ENCODE measurements at regions of chr2 and their contacts with region 1.

Region 1: DNA sequence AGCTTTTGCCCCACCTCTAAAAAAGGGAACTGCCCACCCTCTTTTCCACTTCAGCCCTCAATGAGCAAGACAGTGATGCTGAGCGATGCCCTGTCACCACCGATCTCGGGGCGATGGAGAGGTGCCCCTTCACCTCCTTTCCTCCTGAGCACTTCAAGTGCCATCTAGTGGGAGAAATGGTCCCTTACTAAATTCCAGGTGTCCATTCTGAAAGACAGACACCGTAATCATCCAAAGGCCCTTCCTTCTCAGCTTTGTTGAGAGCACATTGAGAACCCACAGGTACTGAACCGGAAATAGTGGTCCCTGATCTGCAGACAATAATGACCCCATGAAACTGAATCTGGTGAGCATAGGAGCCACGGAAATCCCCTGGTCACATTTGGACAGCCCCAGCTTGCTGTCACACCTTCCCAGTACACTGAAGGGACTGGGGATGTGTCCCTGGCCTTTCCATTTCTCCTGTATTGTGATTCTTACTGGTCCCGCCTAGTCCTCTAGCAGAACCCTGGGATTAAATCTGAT is 38.5 kb downstream of the KCTD18 start:
- DNase-seq: peak; percentile 42
- H3K4me3 Mint-ChIP-seq: no peak overlapping the region
- H3K27ac Mint-ChIP-seq: peak overlapping the region; percentile 37
- H3K4me1 Mint-ChIP-seq: peaks cover 41% of the 10 kb centered on the region
- H3K27me3 Mint-ChIP-seq: no peaks in the 10 kb centered on the region

Region 2: DNA sequence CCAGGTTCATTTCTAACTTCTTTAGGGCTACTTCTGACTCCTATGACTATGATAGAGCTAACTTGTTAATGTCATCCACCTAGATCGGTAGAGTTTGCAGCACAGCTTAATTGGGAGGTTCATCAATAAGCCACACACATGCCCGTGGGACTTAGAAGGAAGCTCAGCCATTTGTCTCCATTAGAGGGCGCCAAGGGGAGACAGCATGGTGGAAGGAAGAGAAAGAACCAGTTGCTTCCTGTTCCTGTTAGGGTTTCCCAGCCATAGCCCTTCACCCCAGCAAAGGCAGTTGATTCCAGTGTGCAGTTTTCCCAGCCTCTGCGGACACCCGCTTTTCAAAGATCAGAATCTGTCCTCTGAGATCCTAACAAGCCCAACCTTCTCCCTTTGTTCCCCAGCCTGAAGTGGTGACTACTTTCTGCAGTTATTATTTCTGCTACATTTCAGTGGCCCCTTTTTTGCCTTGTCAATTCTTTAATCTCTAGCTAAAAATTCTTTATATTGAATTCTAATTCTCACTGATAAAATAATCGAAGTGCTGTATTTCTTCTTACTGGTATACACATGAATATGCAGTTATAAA is 485.7 kb before region 1 on chr2:
- CTCF ChIA-PET with region 1: interaction called, 21 read pairs
- POLR2A ChIA-PET with region 1: no interaction called
- DNase-seq: peak; percentile 68
- H3K4me3 Mint-ChIP-seq: no peak overlapping the region
- H3K27ac Mint-ChIP-seq: no peak overlapping the region
- H3K4me1 Mint-ChIP-seq: peaks cover 7% of the 10 kb centered on the region
- H3K27me3 Mint-ChIP-seq: no peaks in the 10 kb centered on the region

Region 3: DNA sequence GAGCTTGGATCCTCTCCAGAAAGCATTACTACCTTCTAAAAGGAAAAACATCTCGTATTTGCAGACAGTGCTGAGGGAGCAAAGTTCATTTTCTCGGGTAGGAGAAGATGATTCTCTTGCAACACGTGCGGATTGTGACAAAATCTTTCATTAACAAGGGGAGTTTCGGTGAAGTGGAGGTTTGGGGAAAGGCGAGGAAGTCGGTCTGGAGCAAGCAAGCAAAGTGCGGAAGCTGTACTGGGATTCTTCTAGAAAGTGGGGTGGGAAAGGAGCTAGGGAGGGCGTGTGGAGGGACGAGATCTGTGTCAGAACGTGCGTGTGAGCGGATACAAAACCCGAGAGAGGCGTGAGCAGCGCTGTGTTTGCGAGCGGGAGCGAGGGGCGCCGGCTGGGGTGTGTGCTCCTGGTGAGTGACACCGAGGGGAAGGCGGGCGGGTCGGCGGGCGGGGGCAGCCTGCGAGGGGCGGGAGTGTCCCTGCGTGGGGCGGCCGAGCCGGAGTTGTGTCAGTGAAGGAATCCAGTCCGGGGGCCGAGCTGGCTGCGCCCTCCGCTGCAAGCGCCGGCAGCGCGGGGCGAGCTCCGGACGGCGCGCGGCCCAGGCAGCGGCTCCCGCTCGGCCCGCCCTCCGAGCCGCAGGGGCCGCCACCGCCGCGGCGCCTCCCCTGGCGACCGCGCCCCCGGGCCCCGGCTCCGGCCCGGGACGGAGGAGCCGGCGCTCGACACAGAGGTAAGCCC is 165.0 kb before region 1 on chr2 and contains the start of gene SPATS2L:
- CTCF ChIA-PET with region 1: interaction called, 4 read pairs
- POLR2A ChIA-PET with region 1: interaction called, 12 read pairs
- DNase-seq: peak; percentile 72
- H3K4me3 Mint-ChIP-seq: peak within 1 kb of the TSS; percentile 82
- H3K27ac Mint-ChIP-seq: peak within 1 kb of the TSS; percentile 82
- H3K4me1 Mint-ChIP-seq: peaks cover 44% of the 10 kb centered on the region
- H3K27me3 Mint-ChIP-seq: peaks cover 3% of the 10 kb centered on the region
- total RNA-seq, gene SPATS2L: 79.0 to 82.3 TPM

Region 4: DNA sequence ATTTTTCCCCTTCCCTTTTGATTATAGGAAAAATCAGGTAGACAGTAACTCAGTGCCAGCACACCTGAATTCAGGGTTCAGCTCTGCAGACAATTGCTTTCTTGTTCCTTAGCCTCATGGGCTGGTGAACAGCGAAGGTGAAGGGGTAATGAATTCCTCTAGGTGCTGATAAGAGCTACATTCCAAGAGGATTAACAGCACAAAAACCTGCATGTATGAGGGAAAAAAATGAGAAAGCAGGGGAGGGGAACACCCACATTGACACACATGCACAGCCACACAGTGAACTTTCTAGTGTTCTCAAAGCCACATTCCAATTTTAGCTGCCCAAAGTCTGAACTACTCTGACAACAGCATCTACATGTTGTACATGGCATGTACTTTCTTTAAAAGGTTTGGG is 118.8 kb before region 1 on chr2:
- CTCF ChIA-PET with region 1: no interaction called
- POLR2A ChIA-PET with region 1: no interaction called
- DNase-seq: no peak
- H3K4me3 Mint-ChIP-seq: no peak overlapping the region
- H3K27ac Mint-ChIP-seq: no peak overlapping the region
- H3K4me1 Mint-ChIP-seq: no peaks in the 10 kb centered on the region
- H3K27me3 Mint-ChIP-seq: no peaks in the 10 kb centered on the region

Region 5: DNA sequence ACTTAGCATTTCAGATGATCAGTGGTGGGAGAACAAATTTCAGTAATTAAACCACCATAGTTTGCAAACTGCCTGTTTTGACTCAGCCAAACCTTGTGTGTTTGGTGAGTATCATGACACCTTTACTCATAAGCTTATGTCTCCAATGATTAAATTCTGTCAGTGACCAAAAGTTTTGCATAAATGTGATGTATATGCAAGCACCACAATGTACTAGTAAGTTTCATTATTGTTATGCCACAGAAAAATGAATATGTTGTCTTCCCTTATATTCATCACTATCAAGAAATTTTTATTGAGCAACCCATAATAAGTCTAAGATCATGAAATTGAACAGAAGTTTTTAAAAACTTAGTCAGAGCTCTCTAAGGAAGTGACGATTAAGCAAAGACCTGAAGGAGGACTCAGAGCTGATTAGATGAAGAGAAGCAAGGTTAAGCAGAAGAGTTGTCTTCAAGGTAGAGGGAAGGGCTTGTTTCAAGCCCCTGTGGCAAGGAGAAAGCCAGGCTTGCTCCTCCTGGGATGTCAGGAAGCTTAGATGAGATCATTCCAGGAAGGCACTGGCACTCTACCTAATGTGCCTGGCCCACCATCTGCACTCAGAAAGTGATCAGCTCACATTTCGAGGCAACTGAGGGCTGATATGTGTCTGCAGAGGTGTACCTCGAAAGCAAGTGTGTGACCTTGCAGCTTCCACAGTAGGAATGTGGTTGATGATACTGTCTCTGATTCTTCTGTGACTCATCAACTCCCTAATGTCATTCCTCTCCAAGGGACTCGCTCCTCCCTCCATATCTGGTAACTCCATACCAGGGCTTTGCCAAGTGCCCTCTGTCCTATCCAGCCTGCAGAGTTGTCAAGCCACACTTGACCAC is 16.2 kb before region 1 on chr2:
- CTCF ChIA-PET with region 1: interaction called, 9 read pairs
- POLR2A ChIA-PET with region 1: interaction called, 37 read pairs
- DNase-seq: no peak
- H3K4me3 Mint-ChIP-seq: no peak overlapping the region
- H3K27ac Mint-ChIP-seq: peak overlapping the region; percentile 80
- H3K4me1 Mint-ChIP-seq: peaks cover 39% of the 10 kb centered on the region
- H3K27me3 Mint-ChIP-seq: no peaks in the 10 kb centered on the region

Region 6: DNA sequence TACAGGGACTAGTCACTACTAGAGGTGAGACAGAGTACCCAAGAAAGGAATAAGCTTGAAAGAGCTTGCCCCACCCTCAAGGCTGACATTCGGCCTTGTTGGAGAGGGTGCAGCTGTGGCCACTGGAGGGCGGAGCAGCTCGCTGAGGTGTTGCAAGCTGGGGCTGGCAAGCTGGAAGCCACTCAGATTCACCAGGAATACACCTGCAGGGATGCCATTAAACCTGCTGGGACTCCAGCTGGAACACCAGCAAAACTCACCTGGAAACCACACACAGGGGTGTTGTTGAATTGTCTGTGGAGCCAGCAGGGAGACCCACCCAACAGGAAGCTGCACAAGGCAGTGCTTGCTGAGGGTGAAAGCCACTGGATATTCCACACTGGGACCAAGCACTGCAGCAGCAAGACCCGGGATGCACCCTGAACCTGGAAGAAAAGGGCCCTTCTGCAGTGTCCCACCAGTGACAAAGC is 12.4 kb after region 1 on chr2:
- CTCF ChIA-PET with region 1: interaction called, 14 read pairs
- POLR2A ChIA-PET with region 1: interaction called, 6 read pairs
- DNase-seq: peak; percentile 41
- H3K4me3 Mint-ChIP-seq: no peak overlapping the region
- H3K27ac Mint-ChIP-seq: no peak overlapping the region
- H3K4me1 Mint-ChIP-seq: peaks cover 35% of the 10 kb centered on the region
- H3K27me3 Mint-ChIP-seq: no peaks in the 10 kb centered on the region

Measured in activated CD4-positive, alpha-beta memory T cell treated with anti-CD3 and anti-CD28 coated beads, Interleukin-2, amount 10 ng/mL, durations not matched to agents 7 days and 5 days (primary cell).